ENCODE measurements at regions of chr12 and their contacts with region 1.

Region 1: GRCh38 chr12:110449799-110450497 is at the start of gene ARPC3:
- DNase-seq: peak; percentile 97
- H3K4me3 Mint-ChIP-seq: peak within 1 kb of the TSS; percentile 99
- H3K27ac Mint-ChIP-seq: peak within 1 kb of the TSS; percentile 100
- H3K4me1 Mint-ChIP-seq: peaks cover 46% of the 10 kb centered on the region
- H3K27me3 Mint-ChIP-seq: no peaks in the 10 kb centered on the region
- total RNA-seq, gene ARPC3: 460 to 466 TPM

Region 2: DNA sequence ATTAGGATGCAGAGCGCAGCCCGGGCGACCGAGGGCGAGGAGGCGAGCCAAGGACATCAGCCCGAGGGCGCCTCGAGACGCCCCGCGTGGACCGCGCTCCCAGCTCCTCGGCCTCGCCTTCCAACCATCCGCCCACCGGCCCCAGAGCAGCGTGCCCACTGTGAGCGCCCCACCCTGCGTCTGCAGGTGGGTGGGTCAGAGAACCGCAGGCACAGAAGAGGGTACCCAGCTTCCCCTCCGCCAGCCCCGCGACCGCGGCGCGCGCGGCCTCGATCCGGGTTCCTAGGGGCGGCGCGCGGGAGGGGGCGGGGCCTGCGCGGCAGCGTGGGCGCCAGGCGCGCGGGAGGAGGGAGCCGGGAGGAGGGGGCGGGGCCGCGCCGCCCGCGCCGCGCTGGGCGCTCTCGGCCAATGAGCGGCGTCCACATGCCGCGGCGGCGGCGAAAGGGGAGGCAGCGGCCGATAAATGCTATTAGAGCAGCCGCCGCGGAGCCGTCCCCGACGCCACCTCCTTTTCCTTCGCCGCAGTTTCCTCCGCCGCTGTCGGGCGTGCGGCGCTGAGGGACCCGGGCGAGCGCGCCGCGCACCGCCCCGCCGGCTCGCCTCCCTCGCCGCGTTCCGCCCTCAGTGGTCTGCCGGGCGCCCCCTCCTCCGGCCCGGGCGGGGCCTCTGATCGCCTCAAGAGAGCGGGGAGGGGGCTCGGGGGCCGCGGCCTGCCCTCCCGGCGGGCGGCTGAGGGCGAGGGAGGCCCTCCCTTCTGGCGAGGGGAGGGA is 169.0 kb before region 1 on chr12 and contains the start of gene ATP2A2:
- CTCF ChIA-PET with region 1: interaction called, 7 read pairs
- POLR2A ChIA-PET with region 1: interaction called, 16 read pairs
- DNase-seq: peak; percentile 92
- H3K4me3 Mint-ChIP-seq: peak within 1 kb of the TSS; percentile 82
- H3K27ac Mint-ChIP-seq: peak within 1 kb of the TSS; percentile 85
- H3K4me1 Mint-ChIP-seq: peaks cover 46% of the 10 kb centered on the region
- H3K27me3 Mint-ChIP-seq: peaks cover 8% of the 10 kb centered on the region
- total RNA-seq, gene ATP2A2: 142 TPM

Region 3: GRCh38 chr12:110367181-110367864 is 82.6 kb before region 1 on chr12:
- CTCF ChIA-PET with region 1: no interaction called
- POLR2A ChIA-PET with region 1: no interaction called
- DNase-seq: no peak
- H3K4me3 Mint-ChIP-seq: no peak overlapping the region
- H3K27ac Mint-ChIP-seq: no peak overlapping the region
- H3K4me1 Mint-ChIP-seq: no peaks in the 10 kb centered on the region
- H3K27me3 Mint-ChIP-seq: no peaks in the 10 kb centered on the region

Region 4: DNA sequence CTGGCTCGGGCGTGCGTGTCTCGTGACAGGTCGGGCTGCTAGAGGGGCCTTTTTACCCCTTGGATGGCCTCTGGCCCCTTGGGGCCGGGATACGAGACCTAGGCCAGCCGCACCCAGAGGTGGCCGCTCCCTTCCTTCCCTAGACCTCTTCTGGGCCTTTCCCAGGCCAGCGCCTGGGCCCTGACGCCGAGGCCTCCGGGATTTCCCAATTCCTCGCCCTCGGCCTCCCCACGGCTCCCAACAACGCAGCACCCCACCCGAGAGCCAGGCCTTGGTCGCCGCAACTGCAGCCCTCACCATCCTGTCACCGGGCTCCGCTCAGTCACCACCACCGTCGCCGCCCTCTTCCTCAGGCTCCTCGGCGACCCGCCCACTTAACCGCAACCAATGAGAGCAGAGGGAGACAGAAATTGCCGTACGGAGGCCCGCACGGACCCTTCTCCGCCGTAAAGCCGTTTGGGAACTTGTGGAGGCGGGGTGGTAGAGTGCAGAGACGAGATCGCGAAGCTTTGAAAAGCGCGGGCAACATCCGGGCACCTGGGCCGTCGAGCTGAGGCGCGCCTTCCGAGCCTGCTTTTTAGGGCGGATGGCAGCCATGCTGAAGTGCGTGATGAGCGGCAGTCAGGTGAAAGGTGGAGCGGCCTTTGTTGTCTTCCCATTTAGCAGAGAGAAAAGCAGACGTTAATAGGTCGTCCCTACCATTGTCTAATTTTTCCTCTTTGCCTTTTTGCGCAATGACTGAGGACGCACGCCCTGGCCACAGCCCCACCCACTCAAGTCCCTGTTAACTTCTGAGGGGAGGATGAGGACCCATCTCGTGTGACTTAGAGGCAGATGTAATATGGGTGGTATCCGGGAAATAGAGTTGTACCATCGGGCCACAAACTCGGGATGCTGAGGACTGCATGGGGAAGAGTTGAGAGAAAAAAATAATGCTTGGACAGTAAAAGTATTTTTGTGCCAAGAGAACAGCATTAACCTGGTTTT is 52.1 kb after region 1 on chr12 and contains the starts of genes RAD9B and VPS29:
- CTCF ChIA-PET with region 1: interaction called, 31 read pairs
- POLR2A ChIA-PET with region 1: interaction called, 57 read pairs
- DNase-seq: peak; percentile 100
- H3K4me3 Mint-ChIP-seq: peak within 1 kb of the TSS; percentile 94
- H3K27ac Mint-ChIP-seq: peak within 1 kb of the TSS; percentile 93
- H3K4me1 Mint-ChIP-seq: peaks cover 40% of the 10 kb centered on the region
- H3K27me3 Mint-ChIP-seq: no peaks in the 10 kb centered on the region
- total RNA-seq, gene RAD9B: 1.1 to 2.0 TPM
- total RNA-seq, gene VPS29: 129 to 137 TPM

Region 5: GRCh38 chr12:110577717-110578521 is 128.0 kb after region 1 on chr12:
- CTCF ChIA-PET with region 1: interaction called, 6 read pairs
- POLR2A ChIA-PET with region 1: interaction called, 18 read pairs
- DNase-seq: peak; percentile 54
- H3K4me3 Mint-ChIP-seq: peak overlapping the region; percentile 67
- H3K27ac Mint-ChIP-seq: peak overlapping the region; percentile 98
- H3K4me1 Mint-ChIP-seq: peaks cover 66% of the 10 kb centered on the region
- H3K27me3 Mint-ChIP-seq: no peaks in the 10 kb centered on the region

Region 6: GRCh38 chr12:110606253-110606611 is 156.3 kb after region 1 on chr12:
- CTCF ChIA-PET with region 1: interaction called, 79 read pairs
- POLR2A ChIA-PET with region 1: interaction called, 44 read pairs
- DNase-seq: no peak
- H3K4me3 Mint-ChIP-seq: peak overlapping the region; percentile 77
- H3K27ac Mint-ChIP-seq: peak overlapping the region; percentile 67
- H3K4me1 Mint-ChIP-seq: peaks cover 14% of the 10 kb centered on the region
- H3K27me3 Mint-ChIP-seq: no peaks in the 10 kb centered on the region

Region 7: GRCh38 chr12:110826592-110827200 is 376.7 kb after region 1 on chr12:
- CTCF ChIA-PET with region 1: interaction called, 14 read pairs
- POLR2A ChIA-PET with region 1: no interaction called
- DNase-seq: peak; percentile 89
- H3K4me3 Mint-ChIP-seq: peak overlapping the region; percentile 13
- H3K27ac Mint-ChIP-seq: no peak overlapping the region
- H3K4me1 Mint-ChIP-seq: peaks cover 7% of the 10 kb centered on the region
- H3K27me3 Mint-ChIP-seq: peaks cover 6% of the 10 kb centered on the region

Region 8: DNA sequence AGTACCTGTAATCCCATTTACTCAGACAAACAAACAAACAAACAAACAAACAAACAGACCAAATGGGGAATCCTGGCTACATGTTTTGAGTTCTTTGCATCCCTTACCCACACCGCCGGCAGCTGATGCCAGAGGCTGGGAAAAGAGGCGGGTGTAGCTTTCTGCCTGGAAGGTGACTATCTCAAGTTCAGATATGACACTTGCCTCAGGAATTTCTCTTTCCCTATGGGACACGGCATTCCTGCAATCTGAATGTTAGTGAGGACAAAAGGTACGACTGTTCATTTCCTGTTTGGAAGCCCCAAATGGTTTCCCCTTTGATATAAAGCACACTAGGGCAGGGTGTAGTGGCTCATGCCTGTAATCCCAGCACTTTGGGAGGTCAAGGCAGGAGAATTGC is 467.5 kb after region 1 on chr12:
- CTCF ChIA-PET with region 1: no interaction called
- POLR2A ChIA-PET with region 1: no interaction called
- DNase-seq: no peak
- H3K4me3 Mint-ChIP-seq: no peak overlapping the region
- H3K27ac Mint-ChIP-seq: no peak overlapping the region
- H3K4me1 Mint-ChIP-seq: no peaks in the 10 kb centered on the region
- H3K27me3 Mint-ChIP-seq: peaks cover 2% of the 10 kb centered on the region

Measured in activated CD4-positive, alpha-beta memory T cell treated with anti-CD3 and anti-CD28 coated beads, Interleukin-2, amount 10 ng/mL, durations not matched to agents 7 days and 5 days (primary cell).